ENCODE measurements at regions of chr1 and their contacts with region 1.

Region 1: DNA sequence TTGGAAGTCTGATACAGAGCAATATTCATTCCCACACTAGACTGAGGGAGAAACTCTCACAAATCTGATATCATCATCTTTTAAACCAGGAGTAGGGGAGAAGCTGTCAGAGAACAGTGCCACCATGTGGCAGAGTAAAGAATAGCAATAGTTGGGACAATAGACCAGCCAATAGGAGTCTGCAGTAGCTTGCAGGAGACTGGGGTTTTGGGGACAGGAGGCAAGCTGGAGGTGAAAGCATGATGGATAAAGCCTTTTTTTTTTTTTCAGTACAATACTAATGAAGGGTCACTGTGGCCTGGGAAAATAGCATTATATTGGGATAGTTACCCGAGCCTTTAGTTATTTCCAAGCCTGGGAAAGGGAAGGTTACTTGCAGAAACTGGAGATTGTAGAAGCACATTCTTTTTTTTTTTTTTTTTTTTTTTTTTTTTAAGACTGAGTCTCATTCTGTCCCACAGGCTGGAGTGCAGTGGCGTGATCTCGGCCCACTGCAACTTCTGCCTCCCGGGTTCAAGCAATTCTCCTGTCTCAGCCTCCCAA is 120.7 kb downstream of the S1PR1 start:
- DNase-seq: peak in 1 of 3 donors; percentile 78
- ATAC-seq: peak; percentile 91
- H3K4me3 ChIP-seq: no peak overlapping the region
- H3K4me1 ChIP-seq: no peaks in the 10 kb centered on the region
- CTCF ChIP-seq: peak; percentile 64

Region 2: GRCh38 chr1:101309334-101310311 is 47.9 kb before region 1 on chr1:
- intact Hi-C with region 1: loop called in 1 of 2 experiments (anchors 10 kb)
- DNase-seq: peak; percentile 48 to 82 (median 51)
- ATAC-seq: peak; percentile 82
- H3K4me3 ChIP-seq: no peak overlapping the region
- H3K4me1 ChIP-seq: peaks cover 9% of the 10 kb centered on the region
- CTCF ChIP-seq: peak; percentile 83

Region 3: DNA sequence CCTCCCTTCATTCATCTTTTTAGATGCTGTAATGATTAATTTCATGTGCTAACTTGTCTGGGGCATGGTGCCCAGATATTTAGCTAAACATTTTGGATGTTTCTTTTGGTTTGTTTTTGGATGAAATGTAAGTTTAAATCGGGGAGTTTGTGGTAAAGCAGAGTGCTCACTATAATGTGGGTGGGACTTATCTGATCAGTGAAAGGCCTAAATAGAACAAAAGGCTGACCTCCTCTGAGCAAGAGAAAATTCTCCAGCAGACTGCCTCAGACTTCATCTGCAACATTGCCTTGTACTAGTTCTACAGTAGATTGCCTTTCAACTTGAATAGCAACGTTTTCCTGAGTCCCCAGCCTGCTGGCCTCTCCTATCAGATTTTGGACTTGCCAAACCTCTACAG is 62.9 kb after region 1 on chr1:
- intact Hi-C with region 1: no loop called
- DNase-seq: no peak
- ATAC-seq: no peak
- H3K4me3 ChIP-seq: no peak overlapping the region
- H3K4me1 ChIP-seq: no peaks in the 10 kb centered on the region
- CTCF ChIP-seq: no peak